ENCODE measurements at regions of chr13 and their contacts with region 1.

Region 1: GRCh38 chr13:40452741-40453667 is 213.4 kb downstream of the FOXO1 start:
- DNase-seq: no peak
- H3K4me3 ChIP-seq: no peak overlapping the region
- H3K27ac ChIP-seq: no peak overlapping the region
- H3K4me1 ChIP-seq: peaks cover 50% of the 10 kb centered on the region
- CTCF ChIP-seq: no peak

Region 2: DNA sequence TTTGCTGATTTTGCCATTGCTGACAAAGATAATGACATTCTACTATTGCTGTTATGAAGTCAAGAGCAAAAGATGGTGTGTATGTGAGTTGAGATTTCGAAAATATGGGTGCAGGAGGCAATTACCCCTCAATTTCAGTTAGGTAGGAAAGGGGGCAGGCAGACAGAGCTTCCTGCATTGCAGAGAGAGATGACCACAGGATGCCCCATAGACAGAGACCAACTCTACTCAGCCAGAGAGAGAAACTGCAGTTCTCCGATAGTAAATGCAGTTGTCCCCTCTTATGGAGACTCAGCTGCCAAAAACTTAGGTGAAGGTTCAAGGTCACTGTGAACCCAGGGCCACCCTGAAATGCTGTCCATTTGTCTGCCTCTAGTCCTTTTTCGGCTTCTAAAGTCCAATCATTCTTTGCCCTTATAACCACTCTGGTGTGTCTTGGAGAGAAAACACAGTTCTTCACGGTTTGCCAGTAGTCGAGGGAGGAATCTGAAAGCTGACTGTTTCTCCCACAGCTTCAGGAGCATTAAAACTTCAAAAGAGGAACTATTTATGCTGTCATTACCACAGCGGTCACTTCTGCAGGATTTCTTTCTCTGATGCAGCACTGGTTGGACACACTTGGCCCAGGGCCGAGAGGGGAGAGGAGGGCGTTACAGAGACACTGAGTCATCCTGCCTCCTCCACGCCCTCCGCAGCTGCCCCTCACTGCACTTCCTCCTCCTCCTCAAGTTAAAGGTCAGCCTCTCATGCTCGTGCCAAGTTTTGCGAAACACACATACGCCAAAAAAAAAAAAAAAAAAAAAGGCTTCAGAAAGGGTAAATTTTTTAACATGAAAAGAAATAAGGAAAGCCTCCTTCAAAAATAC is 50.9 kb before region 1 on chr13:
- CTCF ChIA-PET with region 1: no interaction called
- POLR2A ChIA-PET with region 1: no interaction called
- intact Hi-C with region 1: no loop called
- DNase-seq: peak; percentile 67
- H3K4me3 ChIP-seq: peak overlapping the region; percentile 21
- H3K27ac ChIP-seq: no peak overlapping the region
- H3K4me1 ChIP-seq: peaks cover 16% of the 10 kb centered on the region
- CTCF ChIP-seq: no peak

Region 3: DNA sequence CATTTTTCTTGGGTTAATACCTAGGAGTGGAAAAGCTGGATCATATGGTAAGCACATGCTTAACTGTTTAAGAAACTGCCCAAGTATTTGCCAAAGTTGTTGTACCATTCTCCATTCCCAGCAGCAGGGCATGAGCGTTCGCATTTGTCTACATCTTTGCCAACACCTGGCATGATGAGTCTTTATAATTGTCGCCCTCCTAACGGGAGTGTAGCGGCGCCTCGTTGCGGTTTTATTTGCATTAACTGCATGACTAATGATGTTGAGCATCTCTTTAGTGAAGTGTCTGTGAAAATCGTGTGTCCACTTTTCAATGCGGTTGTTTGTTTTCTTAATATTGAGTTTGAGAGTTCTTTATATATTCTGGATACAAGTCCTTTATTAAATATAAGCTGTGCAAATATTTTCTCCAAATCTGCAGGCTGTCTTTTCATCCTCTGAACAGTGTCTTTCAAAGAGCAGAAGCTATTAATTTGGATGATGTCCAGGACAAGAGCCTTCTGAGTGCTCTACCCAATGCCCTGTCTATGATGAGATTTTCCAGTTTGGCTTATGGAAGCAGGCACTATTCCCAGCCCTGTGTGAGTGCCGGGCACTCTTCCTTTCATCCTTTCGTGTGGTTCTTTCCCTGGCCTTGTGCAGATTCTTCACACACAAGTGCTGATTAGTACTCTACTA is 11.5 kb after region 1 on chr13:
- CTCF ChIA-PET with region 1: no interaction called
- POLR2A ChIA-PET with region 1: interaction called, 14 read pairs
- intact Hi-C with region 1: no loop called
- DNase-seq: peak; percentile 80
- H3K4me3 ChIP-seq: peak overlapping the region; percentile 42
- H3K27ac ChIP-seq: peak overlapping the region; percentile 26
- H3K4me1 ChIP-seq: peaks cover 43% of the 10 kb centered on the region
- CTCF ChIP-seq: no peak